Keratinocyte (primary cell): ENCODE measurements at regions of chr6 and their contacts with region 1.

Region 1: DNA sequence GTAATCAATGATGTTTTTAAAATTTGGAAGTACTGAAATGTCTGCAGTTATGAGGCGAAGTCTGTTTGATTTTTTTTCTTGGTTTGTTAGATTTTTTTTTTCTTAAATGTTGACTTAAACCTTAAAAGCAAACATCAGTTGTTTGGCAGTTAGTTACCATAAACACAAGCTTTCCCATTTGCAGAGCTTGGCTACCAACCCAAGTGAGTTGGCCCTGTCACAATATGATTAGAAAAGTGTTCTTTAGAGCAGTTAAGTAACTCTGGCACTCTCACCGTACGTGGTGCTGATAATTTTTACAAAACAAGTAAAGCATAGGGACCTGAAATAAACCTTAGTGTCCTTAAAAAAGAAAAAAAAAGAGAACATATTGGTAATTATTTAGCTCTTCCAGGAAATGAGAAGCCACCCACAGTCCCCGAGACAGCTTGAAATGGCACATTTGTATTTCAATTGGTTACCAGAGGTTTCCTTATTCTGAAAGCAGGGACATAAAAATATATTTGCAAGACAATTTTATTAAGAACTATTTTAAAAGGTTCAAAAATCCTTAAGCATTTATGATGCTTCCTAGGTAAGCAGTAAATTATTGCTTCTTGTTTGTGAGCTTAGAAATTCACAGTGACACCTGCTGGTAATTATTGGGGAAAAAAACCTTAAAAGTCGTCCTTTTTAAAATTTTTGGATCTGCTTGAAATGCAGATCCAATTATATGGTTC is 3.9 kb downstream of the HEY2 start:
- DNase-seq: no peak
- H3K4me3 ChIP-seq: no peak overlapping the region
- H3K27ac ChIP-seq: no peak overlapping the region
- H3K4me1 ChIP-seq: peaks cover 15% of the 10 kb centered on the region
- H3K27me3 ChIP-seq: peaks cover 36% of the 10 kb centered on the region
- CTCF ChIP-seq: peak in 2 of 3 experiments; percentile 19 to 25

Region 2: DNA sequence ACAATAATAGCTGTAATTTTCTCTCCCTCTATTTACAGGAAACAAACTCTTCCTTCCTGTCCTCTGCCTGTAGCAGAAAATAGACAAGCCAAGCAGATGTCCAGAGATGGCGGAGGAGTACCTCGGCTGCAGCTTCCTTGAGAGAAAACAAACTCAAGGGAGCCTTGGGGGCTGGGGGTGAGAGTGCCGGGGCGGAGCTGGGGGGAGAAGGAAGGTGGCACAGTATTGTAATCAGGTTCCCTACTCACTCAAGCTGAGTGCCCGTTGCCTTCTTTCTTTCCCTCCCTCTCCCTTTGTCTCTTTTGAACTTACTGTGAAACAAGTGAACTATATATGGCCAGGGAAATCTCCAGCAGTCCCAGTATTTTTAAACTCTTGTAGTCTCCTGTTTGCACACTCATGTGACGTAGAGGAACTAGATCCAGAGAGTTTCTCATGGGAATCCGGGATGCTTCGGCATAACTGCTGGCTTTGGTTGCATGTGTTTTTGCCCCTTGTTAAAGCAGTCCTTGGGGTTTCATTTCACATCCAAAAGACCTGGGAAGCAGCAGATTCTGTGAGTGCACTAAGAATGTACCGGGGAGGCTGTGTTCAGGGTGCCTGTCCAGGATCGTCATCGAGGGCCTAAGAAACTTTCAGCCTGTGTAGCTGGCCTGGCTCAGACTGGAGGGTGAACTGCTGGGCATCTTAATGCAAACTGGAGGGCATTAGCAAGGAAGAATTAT is 407.0 kb before region 1 on chr6:
- dilution Hi-C with region 1: loop called (anchors 25 kb)
- DNase-seq: no peak
- H3K4me3 ChIP-seq: no peak overlapping the region
- H3K27ac ChIP-seq: no peak overlapping the region
- H3K4me1 ChIP-seq: no peaks in the 10 kb centered on the region
- H3K27me3 ChIP-seq: peaks cover 8% of the 10 kb centered on the region
- CTCF ChIP-seq: no peak

Region 3: GRCh38 chr6:125512621-125513020 is 240.8 kb before region 1 on chr6:
- dilution Hi-C with region 1: loop called (anchors 25 kb)
- DNase-seq: no peak
- H3K4me3 ChIP-seq: no peak overlapping the region
- H3K27ac ChIP-seq: no peak overlapping the region
- H3K4me1 ChIP-seq: no peaks in the 10 kb centered on the region
- H3K27me3 ChIP-seq: no peaks in the 10 kb centered on the region
- CTCF ChIP-seq: peak; percentile 41 to 74 (median 46)

Region 4: GRCh38 chr6:125790358-125791150 is 37.2 kb after region 1 on chr6 and contains the start of gene NCOA7:
- dilution Hi-C with region 1: no loop called
- DNase-seq: no peak
- H3K4me3 ChIP-seq: peak within 1 kb of the TSS; percentile 76 to 93 (median 85)
- H3K27ac ChIP-seq: peak within 1 kb of the TSS; percentile 70
- H3K4me1 ChIP-seq: peaks cover 37% of the 10 kb centered on the region
- H3K27me3 ChIP-seq: no peaks in the 10 kb centered on the region
- CTCF ChIP-seq: no peak
- polyA plus RNA-seq, gene NCOA7: 6.8 to 23.5 TPM (median 20.5 TPM) in 3 replicates